ENCODE measurements at regions of chr5 and their contacts with region 1.

Region 1: GRCh38 chr5:149035372-149035790 is 27.5 kb downstream of the SH3TC2 start:
- DNase-seq: peak; percentile 87
- H3K4me3 Mint-ChIP-seq: no peak overlapping the region
- H3K27ac Mint-ChIP-seq: no peak overlapping the region
- H3K4me1 Mint-ChIP-seq: peaks cover 17% of the 10 kb centered on the region
- H3K27me3 Mint-ChIP-seq: no peaks in the 10 kb centered on the region
- CTCF ChIP-seq: peak; percentile 96

Region 2: GRCh38 chr5:148776780-148777179 is 258.6 kb before region 1 on chr5:
- CTCF ChIA-PET with region 1: interaction called, 11 read pairs
- POLR2A ChIA-PET with region 1: no interaction called
- intact Hi-C with region 1: no loop called
- DNase-seq: peak; percentile 95
- H3K4me3 Mint-ChIP-seq: no peak overlapping the region
- H3K27ac Mint-ChIP-seq: no peak overlapping the region
- H3K4me1 Mint-ChIP-seq: peaks cover 11% of the 10 kb centered on the region
- H3K27me3 Mint-ChIP-seq: no peaks in the 10 kb centered on the region
- CTCF ChIP-seq: no peak

Region 3: GRCh38 chr5:148831590-148832565 is 203.5 kb before region 1 on chr5:
- CTCF ChIA-PET with region 1: interaction called, 38 read pairs
- POLR2A ChIA-PET with region 1: interaction called, 7 read pairs
- intact Hi-C with region 1: no loop called
- DNase-seq: no peak
- H3K4me3 Mint-ChIP-seq: peak overlapping the region; percentile 90
- H3K27ac Mint-ChIP-seq: peak overlapping the region; percentile 69
- H3K4me1 Mint-ChIP-seq: peaks cover 87% of the 10 kb centered on the region
- H3K27me3 Mint-ChIP-seq: no peaks in the 10 kb centered on the region
- CTCF ChIP-seq: no peak

Region 4: GRCh38 chr5:148963664-148964063 is 71.7 kb before region 1 on chr5:
- CTCF ChIA-PET with region 1: interaction called, 52 read pairs
- POLR2A ChIA-PET with region 1: no interaction called
- intact Hi-C with region 1: loop called (anchors 1 kb)
- DNase-seq: no peak
- H3K4me3 Mint-ChIP-seq: no peak overlapping the region
- H3K27ac Mint-ChIP-seq: peak overlapping the region; percentile 57
- H3K4me1 Mint-ChIP-seq: peaks cover 58% of the 10 kb centered on the region
- H3K27me3 Mint-ChIP-seq: no peaks in the 10 kb centered on the region
- CTCF ChIP-seq: no peak

Region 5: DNA sequence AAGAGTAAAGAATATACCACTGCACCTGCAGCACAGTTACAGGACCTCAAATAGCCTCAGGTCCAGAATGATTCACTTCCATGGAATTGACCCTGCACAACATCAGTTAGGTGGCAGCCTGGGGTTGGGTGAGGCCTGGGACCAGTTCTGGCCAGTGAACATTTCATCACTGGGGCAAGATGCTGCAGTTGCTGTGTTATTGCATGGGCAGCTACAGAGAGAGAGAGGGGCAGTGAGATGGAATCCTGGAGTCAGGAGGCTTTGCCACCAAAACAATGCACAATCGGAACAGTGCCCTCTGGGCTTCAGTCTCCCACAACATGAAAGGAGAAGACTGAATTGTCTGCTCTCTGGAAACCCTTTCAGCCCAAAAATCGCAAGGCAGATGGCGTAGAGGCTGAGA is 24.3 kb before region 1 on chr5:
- CTCF ChIA-PET with region 1: interaction called, 300 read pairs
- POLR2A ChIA-PET with region 1: interaction called, 9 read pairs
- intact Hi-C with region 1: loop called (anchors 2 kb)
- DNase-seq: peak; percentile 89
- H3K4me3 Mint-ChIP-seq: no peak overlapping the region
- H3K27ac Mint-ChIP-seq: peak overlapping the region; percentile 81
- H3K4me1 Mint-ChIP-seq: peaks cover 24% of the 10 kb centered on the region
- H3K27me3 Mint-ChIP-seq: no peaks in the 10 kb centered on the region
- CTCF ChIP-seq: peak; percentile 14

Region 6: GRCh38 chr5:149074106-149074505 is 38.7 kb after region 1 on chr5:
- CTCF ChIA-PET with region 1: interaction called, 11 read pairs
- POLR2A ChIA-PET with region 1: interaction called, 5 read pairs
- intact Hi-C with region 1: no loop called
- DNase-seq: no peak
- H3K4me3 Mint-ChIP-seq: no peak overlapping the region
- H3K27ac Mint-ChIP-seq: peak overlapping the region; percentile 53
- H3K4me1 Mint-ChIP-seq: peaks cover 32% of the 10 kb centered on the region
- H3K27me3 Mint-ChIP-seq: no peaks in the 10 kb centered on the region
- CTCF ChIP-seq: no peak

Region 7: DNA sequence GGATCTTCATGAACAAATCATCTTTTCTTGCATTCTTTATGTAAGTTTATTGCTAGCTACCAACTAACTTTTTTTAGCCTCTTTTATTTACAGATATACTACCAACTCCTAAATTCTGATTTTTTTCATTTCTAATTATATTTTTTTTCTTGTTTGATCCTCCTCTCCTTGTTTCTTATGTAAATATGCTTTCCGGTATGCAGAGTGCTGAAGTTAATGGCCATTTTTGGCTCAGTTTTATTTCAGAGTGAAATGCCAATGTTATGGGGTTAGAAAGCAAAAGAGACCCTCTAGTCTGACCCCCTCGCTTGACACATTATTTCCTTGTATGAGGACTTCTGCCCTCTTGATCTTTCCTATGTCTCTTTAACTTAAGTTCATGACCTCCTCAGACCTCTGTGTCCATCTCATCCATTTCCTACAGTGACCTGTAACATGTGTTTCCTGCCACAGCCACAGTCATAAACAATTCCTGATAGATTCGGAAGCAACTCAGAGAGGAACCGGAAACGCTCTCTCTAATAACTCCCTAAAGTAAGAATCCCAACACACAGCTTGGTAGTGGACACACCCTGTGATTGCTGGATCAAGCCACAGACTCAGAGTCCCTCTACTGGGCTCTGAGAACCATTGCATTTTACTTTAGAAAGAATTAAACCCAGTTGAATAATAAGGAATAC is 193.4 kb after region 1 on chr5:
- CTCF ChIA-PET with region 1: interaction called, 24 read pairs
- POLR2A ChIA-PET with region 1: no interaction called
- intact Hi-C with region 1: no loop called
- DNase-seq: peak; percentile 84
- H3K4me3 Mint-ChIP-seq: peak overlapping the region; percentile 0
- H3K27ac Mint-ChIP-seq: peak overlapping the region; percentile 73
- H3K4me1 Mint-ChIP-seq: peaks cover 6% of the 10 kb centered on the region
- H3K27me3 Mint-ChIP-seq: no peaks in the 10 kb centered on the region
- CTCF ChIP-seq: peak; percentile 83